T-cell (primary cell): ENCODE measurements at regions of chr7 and their contacts with region 1.

Region 1: GRCh38 chr7:156685243-156685642 is 44.7 kb downstream of the RNF32 start:
- DNase-seq: no peak
- ATAC-seq: no peak
- H3K4me3 ChIP-seq: no peak overlapping the region
- H3K4me3 Mint-ChIP-seq: no peak overlapping the region
- H3K27ac ChIP-seq: no peak overlapping the region
- H3K27ac Mint-ChIP-seq: no peak overlapping the region
- H3K4me1 ChIP-seq: no peaks in the 10 kb centered on the region
- H3K4me1 Mint-ChIP-seq: no peaks in the 10 kb centered on the region
- H3K27me3 ChIP-seq: no peaks in the 10 kb centered on the region
- H3K27me3 Mint-ChIP-seq: no peaks in the 10 kb centered on the region

Region 2: DNA sequence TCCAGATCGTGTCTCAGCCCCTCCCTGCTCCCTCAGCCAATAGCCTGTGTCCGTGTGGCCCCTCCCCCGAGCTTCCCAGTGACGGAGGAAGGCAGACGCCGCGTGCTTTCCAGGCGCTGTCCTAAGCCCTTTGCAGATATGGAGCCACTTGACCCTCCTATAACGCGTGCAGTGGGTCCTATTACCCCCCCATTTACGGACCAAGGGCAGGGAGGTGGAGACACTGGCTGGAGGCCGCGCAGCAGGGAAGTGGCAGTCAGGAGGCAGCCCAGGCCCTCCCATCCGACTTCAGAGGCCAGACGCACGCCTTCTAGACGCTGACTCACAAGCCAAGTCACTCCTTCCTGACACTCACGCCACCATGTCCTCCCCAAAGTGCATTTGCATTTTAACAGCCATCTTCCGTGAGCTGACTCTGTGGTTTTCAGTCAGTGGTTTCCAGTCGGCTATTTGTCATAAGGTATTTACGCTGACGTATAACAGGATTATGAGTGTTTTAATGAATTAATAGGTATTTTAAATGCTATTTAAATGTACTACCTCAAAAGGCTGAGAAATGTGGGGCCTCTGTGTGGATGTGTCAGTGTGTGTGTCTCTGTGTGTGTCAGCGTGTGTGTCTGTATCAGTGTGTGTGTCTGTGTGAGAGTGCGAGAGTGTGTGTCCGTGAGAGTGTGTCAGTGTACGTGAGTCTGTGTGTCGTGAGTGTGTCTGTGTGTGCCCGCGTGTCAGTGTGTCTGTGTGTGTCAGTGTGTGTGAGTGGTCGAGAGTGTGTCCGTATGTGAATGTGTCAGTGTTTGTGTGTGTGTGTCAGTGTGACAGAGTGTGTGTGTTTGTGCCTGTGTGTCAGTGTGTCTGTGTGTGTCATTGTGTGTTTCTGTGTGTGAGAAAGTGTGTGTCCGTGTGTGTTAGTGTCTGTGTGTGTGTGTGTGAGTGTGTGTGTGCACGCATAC is 1479.6 kb before region 1 on chr7:
- CTCF ChIA-PET with region 1: no interaction called
- POLR2A ChIA-PET with region 1: no interaction called
- DNase-seq: peak; percentile 50 to 95 (median 80)
- ATAC-seq: peak; percentile 92 to 96 (median 94)
- H3K4me3 ChIP-seq: peak overlapping the region; percentile 63 to 66
- H3K4me3 Mint-ChIP-seq: peak overlapping the region; percentile 68 to 78 (median 77)
- H3K27ac ChIP-seq: peak overlapping the region; percentile 88
- H3K27ac Mint-ChIP-seq: peak overlapping the region; percentile 83 to 90
- H3K4me1 ChIP-seq: peaks cover 9 to 26% of the 10 kb centered on the region in 2 experiments
- H3K4me1 Mint-ChIP-seq: peaks cover 21 to 28% (median 23%) of the 10 kb centered on the region in 3 donors
- H3K27me3 ChIP-seq: peaks cover 0 to 3% of the 10 kb centered on the region in 2 experiments
- H3K27me3 Mint-ChIP-seq: no peaks in the 10 kb centered on the region

Region 3: GRCh38 chr7:157392256-157393037 is 707.2 kb after region 1 on chr7:
- CTCF ChIA-PET with region 1: no interaction called
- POLR2A ChIA-PET with region 1: interaction called in 1 of 2 experiments, 12 read pairs
- DNase-seq: no peak
- ATAC-seq: no peak
- H3K4me3 ChIP-seq: no peak overlapping the region
- H3K4me3 Mint-ChIP-seq: no peak overlapping the region
- H3K27ac ChIP-seq: no peak overlapping the region
- H3K27ac Mint-ChIP-seq: no peak overlapping the region
- H3K4me1 ChIP-seq: peaks cover 13 to 23% of the 10 kb centered on the region in 2 experiments
- H3K4me1 Mint-ChIP-seq: peaks cover 26 to 44% (median 43%) of the 10 kb centered on the region in 3 donors
- H3K27me3 ChIP-seq: no peaks in the 10 kb centered on the region
- H3K27me3 Mint-ChIP-seq: no peaks in the 10 kb centered on the region